PC-3 (cell line): ENCODE measurements at regions of chr12 and their contacts with region 1.

Region 1: DNA sequence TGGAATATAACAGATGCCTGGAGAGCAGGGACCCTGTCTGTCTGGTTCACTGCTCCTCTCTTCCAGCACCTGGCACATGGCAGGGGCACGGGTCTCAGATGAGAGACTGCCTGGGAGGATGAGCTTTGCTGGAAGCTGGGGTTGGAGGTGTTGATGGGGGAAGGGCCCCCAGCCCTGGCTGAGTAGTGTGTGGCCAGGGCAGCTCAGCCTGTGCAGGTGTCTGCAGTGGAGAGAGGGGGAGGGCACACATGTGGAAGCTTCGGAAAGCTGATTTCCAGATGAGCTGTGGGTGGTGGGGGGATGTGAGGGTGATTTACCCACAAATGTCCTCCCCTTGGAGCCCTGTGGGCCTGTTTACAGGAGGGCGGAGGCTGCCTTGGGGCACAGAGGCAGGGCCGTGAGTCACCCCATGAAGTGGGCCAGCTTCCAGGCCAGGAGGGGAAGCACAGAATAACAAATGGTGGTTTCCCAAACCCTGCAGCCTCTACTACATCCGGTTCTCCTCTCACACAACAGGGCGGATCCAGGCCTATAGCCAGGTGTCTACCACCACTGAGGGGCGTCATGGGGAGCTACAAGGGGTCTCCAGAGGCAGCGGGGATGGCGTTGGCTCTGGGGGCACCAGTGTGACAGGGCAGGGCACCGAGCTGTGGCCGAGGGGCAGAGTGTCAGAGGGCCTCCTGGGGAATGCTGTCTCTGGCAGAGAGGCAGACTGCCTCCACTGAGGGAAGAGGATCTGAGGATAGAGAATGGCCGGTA is 11.0 kb downstream of the KRT7 start:
- DNase-seq: peak; percentile 97
- ATAC-seq: peak; percentile 56
- H3K4me3 ChIP-seq: peak overlapping the region; percentile 34; the same call in 1 of the 2 replicates
- H3K27ac ChIP-seq: peak overlapping the region; percentile 96
- H3K4me1 ChIP-seq: peaks cover 92% of the 10 kb centered on the region
- H3K27me3 ChIP-seq: no peaks in the 10 kb centered on the region
- CTCF ChIP-seq: no peak

Region 2: DNA sequence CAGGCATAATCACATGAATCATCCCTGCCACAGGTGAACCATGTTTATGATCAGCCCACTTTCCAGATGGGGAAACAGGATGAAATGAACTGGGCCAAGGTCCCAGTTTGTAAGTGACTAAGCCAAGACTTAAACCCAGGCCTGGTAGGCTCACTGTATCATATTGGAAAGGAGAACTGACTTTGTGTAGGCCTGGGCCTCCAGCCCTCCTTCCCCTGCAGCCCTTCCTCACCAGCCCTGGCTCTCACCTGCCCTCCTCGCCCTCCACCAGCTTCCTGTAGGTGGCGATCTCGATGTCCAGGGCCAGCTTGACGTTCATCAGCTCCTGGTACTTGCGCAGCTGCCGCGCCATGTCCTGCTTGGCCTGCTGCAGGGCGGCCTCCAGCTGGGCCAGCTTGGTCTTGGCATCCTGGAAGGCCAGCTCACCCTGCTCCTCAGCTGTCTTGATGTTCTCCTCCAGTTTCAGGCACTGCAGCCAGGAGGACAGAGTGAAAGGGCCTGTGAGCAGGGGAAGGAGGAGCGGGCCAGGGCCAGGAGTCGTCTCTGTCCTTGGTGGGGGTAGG is 72.0 kb before region 1 on chr12:
- CTCF ChIA-PET with region 1: no interaction called
- POLR2A ChIA-PET with region 1: no interaction called
- intact Hi-C with region 1: loop called (anchors 2 kb)
- DNase-seq: peak; percentile 67
- ATAC-seq: peak; percentile 52
- H3K4me3 ChIP-seq: no peak overlapping the region
- H3K27ac ChIP-seq: no peak overlapping the region
- H3K4me1 ChIP-seq: peaks cover 30% of the 10 kb centered on the region
- H3K27me3 ChIP-seq: no peaks in the 10 kb centered on the region
- CTCF ChIP-seq: peak; percentile 68

Region 3: GRCh38 chr12:52285172-52285745 is 41.2 kb after region 1 on chr12:
- CTCF ChIA-PET with region 1: interaction called, 7 read pairs
- POLR2A ChIA-PET with region 1: interaction called, 14 read pairs
- intact Hi-C with region 1: loop called (anchors 2 kb)
- DNase-seq: peak; percentile 93
- ATAC-seq: peak; percentile 3
- H3K4me3 ChIP-seq: peak overlapping the region; percentile 74
- H3K27ac ChIP-seq: peak overlapping the region; percentile 98
- H3K4me1 ChIP-seq: peaks cover 58% of the 10 kb centered on the region
- H3K27me3 ChIP-seq: no peaks in the 10 kb centered on the region
- CTCF ChIP-seq: peak; percentile 41